BJ (cell line): ENCODE measurements at regions of chr17 and their contacts with region 1.

Region 1: GRCh38 chr17:19362277-19363113 is at the start of gene B9D1:
- DNase-seq: no peak
- H3K4me3 ChIP-seq: peak within 1 kb of the TSS; percentile 56
- H3K27me3 ChIP-seq: no peaks in the 10 kb centered on the region
- CTCF ChIP-seq: peak; percentile 93
- polyA plus RNA-seq, gene B9D1: 43.3 and 55.8 TPM in 2 replicates

Region 2: GRCh38 chr17:19284005-19284959 is 78.2 kb before region 1 on chr17:
- CTCF ChIA-PET with region 1: no interaction called
- POLR2A ChIA-PET with region 1: no interaction called
- DNase-seq: no peak
- H3K4me3 ChIP-seq: no peak overlapping the region
- H3K27me3 ChIP-seq: no peaks in the 10 kb centered on the region
- CTCF ChIP-seq: no peak

Region 3: DNA sequence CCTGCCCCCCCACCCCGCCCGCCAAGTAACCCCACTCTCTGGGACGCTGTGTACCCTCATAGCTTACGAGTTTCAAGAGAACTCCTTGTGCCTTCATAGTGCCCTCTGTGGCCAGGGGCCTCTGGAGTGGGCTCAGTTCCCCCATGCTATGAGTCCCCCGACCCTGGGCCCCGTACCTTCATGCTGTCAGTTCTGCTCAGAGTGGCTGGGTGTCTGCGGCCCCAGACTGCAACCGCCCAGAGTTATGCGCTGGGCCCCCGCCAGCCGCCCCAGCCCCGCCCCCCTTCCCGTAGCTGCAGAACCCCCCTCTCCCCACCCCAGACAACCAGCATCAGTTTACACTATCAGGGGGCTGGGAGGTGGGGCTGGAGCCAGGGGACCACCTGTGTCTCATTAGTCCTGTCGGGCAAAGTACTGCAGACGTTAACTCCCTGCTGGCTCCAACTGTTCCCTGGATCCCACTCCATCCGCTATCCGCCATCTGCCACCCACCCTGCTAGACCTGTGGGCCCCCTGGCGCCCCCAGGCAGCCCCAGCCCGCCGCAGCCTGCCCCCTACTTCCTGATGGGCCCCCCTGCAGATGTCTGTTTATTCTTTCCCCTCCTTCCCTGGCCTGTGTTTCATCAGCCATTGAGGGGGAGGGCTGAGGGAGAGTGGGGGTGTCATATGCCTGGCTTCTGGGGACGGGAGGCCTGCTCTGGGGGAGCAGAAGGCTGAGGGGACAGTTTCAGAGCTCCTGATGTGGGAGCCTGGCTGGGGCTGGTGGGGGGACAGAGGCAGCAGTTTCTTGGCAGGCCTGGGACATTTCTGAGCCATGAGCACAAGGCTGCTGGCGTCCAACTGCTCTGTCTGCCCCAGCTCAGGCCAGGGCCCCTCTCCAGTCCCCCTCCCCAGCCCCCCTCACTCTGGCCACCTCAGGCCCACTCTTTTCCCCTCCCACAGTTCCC is 24.8 kb after region 1 on chr17 and contains the start of gene MFAP4:
- CTCF ChIA-PET with region 1: interaction called, 12 read pairs
- POLR2A ChIA-PET with region 1: no interaction called
- DNase-seq: peak; percentile 68
- H3K4me3 ChIP-seq: peak within 1 kb of the TSS; percentile 53
- H3K27me3 ChIP-seq: no peaks in the 10 kb centered on the region
- CTCF ChIP-seq: no peak
- polyA plus RNA-seq, gene MFAP4: 62.1 and 86.8 TPM in 2 replicates

Region 4: GRCh38 chr17:19447085-19447583 is 84.6 kb after region 1 on chr17:
- CTCF ChIA-PET with region 1: interaction called, 178 read pairs
- POLR2A ChIA-PET with region 1: no interaction called
- DNase-seq: no peak
- H3K4me3 ChIP-seq: no peak overlapping the region
- H3K27me3 ChIP-seq: peaks cover under 1% of the 10 kb centered on the region; the same call in 1 of the 2 replicates
- CTCF ChIP-seq: peak; percentile 84

Region 5: GRCh38 chr17:19464031-19465026 is 101.8 kb after region 1 on chr17:
- CTCF ChIA-PET with region 1: interaction called, 16 read pairs
- POLR2A ChIA-PET with region 1: no interaction called
- DNase-seq: no peak
- H3K4me3 ChIP-seq: no peak overlapping the region
- H3K27me3 ChIP-seq: no peaks in the 10 kb centered on the region; the same call in none of the 2 replicates
- CTCF ChIP-seq: no peak

Region 6: DNA sequence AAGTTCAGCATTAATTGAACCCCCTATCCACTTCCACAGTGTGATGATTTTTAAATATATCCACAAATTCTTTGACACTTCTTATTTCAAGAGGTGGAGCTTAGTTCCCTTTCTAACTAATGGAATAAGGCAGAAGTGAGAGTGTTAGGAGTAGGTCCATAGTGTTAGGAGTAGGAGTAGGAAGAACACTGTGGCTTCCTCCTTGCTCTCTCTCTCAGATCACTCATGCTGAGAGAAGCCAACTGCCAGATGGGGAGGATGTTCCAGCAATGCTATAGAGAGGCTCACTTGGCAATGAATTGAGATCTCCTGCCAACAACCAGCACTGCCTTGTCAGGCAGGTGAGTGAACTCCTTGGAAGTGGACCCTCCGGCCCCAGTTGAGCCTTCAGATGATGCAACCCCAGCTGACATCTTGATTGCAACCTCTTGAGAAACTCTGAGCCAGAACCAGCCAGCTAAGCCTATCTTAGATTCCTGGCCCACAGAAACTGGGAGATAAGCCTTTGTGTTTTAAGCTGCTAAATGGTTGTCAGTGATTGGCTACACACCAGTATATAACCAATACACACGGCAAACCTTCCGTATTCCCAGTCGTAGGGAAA is 691.0 kb after region 1 on chr17:
- CTCF ChIA-PET with region 1: no interaction called
- POLR2A ChIA-PET with region 1: no interaction called
- DNase-seq: no peak
- H3K4me3 ChIP-seq: no peak overlapping the region
- H3K27me3 ChIP-seq: peaks cover 9% of the 10 kb centered on the region
- CTCF ChIP-seq: no peak